Mucosa of descending colon (tissue), 3 donors: ENCODE measurements at regions of chr4 and their contacts with region 1.

Region 1: GRCh38 chr4:174318829-174319764 is 35.4 kb downstream of the CEP44 start:
- DNase-seq: peak in 1 of 3 donors; percentile 13
- ATAC-seq: no peak
- H3K4me3 ChIP-seq: no peak overlapping the region
- H3K4me1 ChIP-seq: no peaks in the 10 kb centered on the region
- CTCF ChIP-seq: no peak

Region 2: GRCh38 chr4:173505924-173506518 is 813.1 kb before region 1 on chr4:
- intact Hi-C with region 1: loop called in 1 of 2 experiments (anchors 10 kb)
- DNase-seq: peak in 2 of 3 donors; percentile 67 to 74
- ATAC-seq: peak; percentile 80
- H3K4me3 ChIP-seq: no peak overlapping the region
- H3K4me1 ChIP-seq: no peaks in the 10 kb centered on the region
- CTCF ChIP-seq: peak; percentile 48

Region 3: DNA sequence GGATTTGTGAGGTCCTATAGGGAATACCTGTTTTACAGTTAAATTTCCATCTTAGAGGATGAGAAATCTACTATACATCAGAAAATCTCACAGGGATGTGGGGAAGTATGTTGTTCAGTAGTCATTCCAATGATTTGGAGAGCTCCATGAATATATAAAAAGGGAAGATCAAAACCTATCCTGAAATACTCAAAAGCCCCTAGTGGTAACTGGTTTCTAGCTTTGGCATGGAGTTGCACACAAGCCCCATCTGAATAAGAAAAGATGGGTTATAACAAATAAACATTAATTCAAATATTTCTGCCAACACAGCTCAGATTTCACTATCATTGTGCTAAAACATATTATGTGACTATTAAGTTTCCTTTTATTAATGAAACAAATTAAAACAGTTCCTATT is 137.3 kb before region 1 on chr4:
- intact Hi-C with region 1: no loop called
- DNase-seq: no peak
- ATAC-seq: no peak
- H3K4me3 ChIP-seq: no peak overlapping the region
- H3K4me1 ChIP-seq: no peaks in the 10 kb centered on the region
- CTCF ChIP-seq: no peak

Region 4: DNA sequence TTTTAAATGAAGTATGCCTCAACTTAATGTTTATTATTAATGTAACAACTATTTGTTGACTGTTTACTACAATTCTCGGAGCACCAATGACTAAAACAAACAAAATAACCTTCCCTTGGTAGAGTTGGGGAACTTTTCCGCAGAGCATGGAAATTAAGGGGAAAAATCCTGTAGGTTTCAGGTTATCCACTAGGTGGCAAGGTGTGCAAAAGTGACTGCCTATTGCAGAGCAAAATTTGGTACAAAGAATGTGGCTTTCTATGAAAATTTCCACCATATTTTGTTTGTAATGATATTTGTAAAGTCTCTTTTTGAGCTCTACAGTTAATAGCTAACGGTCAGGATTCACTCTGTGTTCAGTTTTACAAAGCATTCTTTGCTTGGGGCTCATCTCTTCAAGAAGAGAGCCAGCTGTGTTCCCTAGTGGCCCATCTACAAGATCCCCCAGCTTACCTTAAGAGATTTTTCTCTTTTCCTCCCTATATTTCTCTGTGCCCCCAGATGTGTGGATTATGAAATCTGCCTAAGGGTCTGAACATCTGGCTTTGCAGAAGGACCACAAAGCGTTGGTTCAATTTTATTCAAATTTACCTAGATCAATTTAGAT is 96.7 kb before region 1 on chr4:
- intact Hi-C with region 1: loop called (anchors 5 to 10 kb)
- DNase-seq: no peak
- ATAC-seq: peak; percentile 61
- H3K4me3 ChIP-seq: no peak overlapping the region
- H3K4me1 ChIP-seq: peaks cover 5% of the 10 kb centered on the region
- CTCF ChIP-seq: peak; percentile 8